GM12878 (cell line): ENCODE measurements at regions of chr11 and their contacts with region 1.

Region 1: DNA sequence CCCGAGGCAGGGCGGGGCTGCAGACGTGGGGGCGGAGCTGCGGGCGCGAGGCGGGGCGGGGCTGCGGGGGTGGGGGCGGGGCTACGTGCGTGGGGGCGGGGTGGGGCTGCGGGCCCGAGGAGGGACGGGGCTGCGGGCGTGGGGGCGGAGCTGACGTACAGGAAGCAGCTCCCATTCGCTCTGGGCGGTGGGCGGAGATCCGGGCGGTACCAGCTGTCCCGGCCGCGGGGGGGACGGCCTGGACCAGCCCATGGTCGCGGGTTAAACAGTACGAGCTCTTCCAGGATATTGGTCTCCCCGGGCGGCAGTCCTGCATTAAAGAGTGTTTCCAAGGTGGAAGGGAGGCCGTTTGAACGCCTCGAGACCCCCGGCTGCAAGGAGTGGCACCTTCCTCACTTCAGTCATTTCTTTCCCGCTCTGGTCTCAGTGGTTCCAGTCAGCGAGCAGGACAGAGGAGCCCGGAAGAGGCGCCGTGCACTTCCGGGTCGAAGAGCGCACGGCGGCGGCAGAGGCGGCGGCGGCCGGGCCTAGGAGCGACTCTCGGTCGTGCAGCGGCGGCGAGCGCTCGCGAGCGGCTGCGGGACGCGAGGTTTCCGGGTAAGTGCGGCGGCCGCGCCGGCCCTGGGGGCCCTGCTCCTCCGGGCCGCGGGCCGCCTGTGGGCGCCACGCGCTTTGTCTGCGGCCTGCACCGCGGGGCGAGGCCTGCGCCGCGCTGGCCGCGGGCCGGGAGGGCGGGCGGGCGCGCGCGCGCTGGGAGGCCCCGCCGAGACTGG is at the start of gene PHRF1:
- DNase-seq: peak; percentile 66
- ATAC-seq: peak; percentile 95
- H3K4me3 ChIP-seq: peak within 1 kb of the TSS; percentile 86
- H3K27ac ChIP-seq: peak within 1 kb of the TSS; percentile 100
- H3K4me1 ChIP-seq: peaks cover 16% of the 10 kb centered on the region
- H3K27me3 ChIP-seq: peaks cover 0 to 3% of the 10 kb centered on the region in 2 experiments; a peak in 2 of 4 replicates
- CTCF ChIP-seq: no peak
- EP300 ChIP-seq: no peak
- POLR2A ChIP-seq: peak; percentile 89
- RAD21 ChIP-seq: no peak
- polyA plus RNA-seq, gene PHRF1: 0.13 to 0.42 TPM

Region 2: GRCh38 chr11:535519-536454 is 40.4 kb before region 1 on chr11 and contains the start of gene HRAS:
- CTCF ChIA-PET with region 1: interaction called, 4 read pairs
- POLR2A ChIA-PET with region 1: interaction called, 15 read pairs
- RAD21 ChIA-PET with region 1: interaction called, 5 read pairs
- SMC1A ChIA-PET with region 1: interaction called, 3 read pairs
- in situ Hi-C with region 1: no loop called
- intact Hi-C with region 1: no loop called
- DNase-seq: peak; percentile 59
- ATAC-seq: peak; percentile 88
- H3K4me3 ChIP-seq: peak within 1 kb of the TSS; percentile 90
- H3K27ac ChIP-seq: peak within 1 kb of the TSS; percentile 79
- H3K4me1 ChIP-seq: peaks cover 28% of the 10 kb centered on the region
- H3K27me3 ChIP-seq: no peaks in the 10 kb centered on the region
- CTCF ChIP-seq: no peak
- EP300 ChIP-seq: no peak
- POLR2A ChIP-seq: peak; percentile 81
- RAD21 ChIP-seq: no peak
- polyA plus RNA-seq, gene HRAS: 2.8 to 12.7 TPM

Region 3: GRCh38 chr11:615504-616319 is 39.5 kb after region 1 on chr11 and contains the start of gene IRF7:
- CTCF ChIA-PET with region 1: interaction called, 3 read pairs
- POLR2A ChIA-PET with region 1: interaction called, 10 read pairs
- RAD21 ChIA-PET with region 1: interaction called, 4 read pairs
- SMC1A ChIA-PET with region 1: interaction called, 3 read pairs
- in situ Hi-C with region 1: no loop called
- intact Hi-C with region 1: no loop called
- DNase-seq: peak; percentile 89
- ATAC-seq: peak; percentile 92
- H3K4me3 ChIP-seq: peak within 1 kb of the TSS; percentile 90
- H3K27ac ChIP-seq: peak within 1 kb of the TSS; percentile 100
- H3K4me1 ChIP-seq: peaks cover 14% of the 10 kb centered on the region
- H3K27me3 ChIP-seq: no peaks in the 10 kb centered on the region
- CTCF ChIP-seq: no peak
- EP300 ChIP-seq: peak in 1 of 2 experiments; percentile 11; a peak in 1 of 4 replicates
- POLR2A ChIP-seq: peak; percentile 93
- RAD21 ChIP-seq: no peak
- polyA plus RNA-seq, gene IRF7: 4.4 to 26.4 TPM